ENCODE measurements at regions of chr7 and their contacts with region 1.

Region 1: GRCh38 chr7:75727881-75728592 is 10.7 kb downstream of the HIP1 start:
- DNase-seq: peak; percentile 65
- H3K4me3 Mint-ChIP-seq: peak overlapping the region; percentile 10
- H3K27ac Mint-ChIP-seq: peak overlapping the region; percentile 84
- H3K4me1 Mint-ChIP-seq: peaks cover 27% of the 10 kb centered on the region
- H3K27me3 Mint-ChIP-seq: no peaks in the 10 kb centered on the region

Region 2: DNA sequence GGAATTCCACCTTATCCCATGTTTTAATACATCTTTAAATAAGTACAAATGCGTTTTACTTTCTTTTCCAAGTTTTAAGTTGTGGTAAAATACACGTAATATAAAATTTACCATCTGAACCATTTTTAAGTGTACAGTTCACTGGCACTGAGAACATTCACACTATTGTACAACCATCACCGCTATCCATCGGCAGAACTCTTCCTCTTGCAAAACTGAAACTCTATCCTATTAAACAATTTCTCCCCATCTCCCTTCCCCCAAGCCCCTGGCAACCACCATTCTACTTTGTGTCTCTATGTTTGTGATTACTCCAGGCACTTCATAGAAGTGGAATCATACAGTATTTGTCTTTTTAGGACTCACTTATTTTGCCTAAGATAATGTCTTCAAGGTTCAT is 23.1 kb before region 1 on chr7:
- CTCF ChIA-PET with region 1: no interaction called
- POLR2A ChIA-PET with region 1: no interaction called
- DNase-seq: no peak
- H3K4me3 Mint-ChIP-seq: no peak overlapping the region
- H3K27ac Mint-ChIP-seq: no peak overlapping the region
- H3K4me1 Mint-ChIP-seq: no peaks in the 10 kb centered on the region
- H3K27me3 Mint-ChIP-seq: peaks cover 5% of the 10 kb centered on the region

Region 3: DNA sequence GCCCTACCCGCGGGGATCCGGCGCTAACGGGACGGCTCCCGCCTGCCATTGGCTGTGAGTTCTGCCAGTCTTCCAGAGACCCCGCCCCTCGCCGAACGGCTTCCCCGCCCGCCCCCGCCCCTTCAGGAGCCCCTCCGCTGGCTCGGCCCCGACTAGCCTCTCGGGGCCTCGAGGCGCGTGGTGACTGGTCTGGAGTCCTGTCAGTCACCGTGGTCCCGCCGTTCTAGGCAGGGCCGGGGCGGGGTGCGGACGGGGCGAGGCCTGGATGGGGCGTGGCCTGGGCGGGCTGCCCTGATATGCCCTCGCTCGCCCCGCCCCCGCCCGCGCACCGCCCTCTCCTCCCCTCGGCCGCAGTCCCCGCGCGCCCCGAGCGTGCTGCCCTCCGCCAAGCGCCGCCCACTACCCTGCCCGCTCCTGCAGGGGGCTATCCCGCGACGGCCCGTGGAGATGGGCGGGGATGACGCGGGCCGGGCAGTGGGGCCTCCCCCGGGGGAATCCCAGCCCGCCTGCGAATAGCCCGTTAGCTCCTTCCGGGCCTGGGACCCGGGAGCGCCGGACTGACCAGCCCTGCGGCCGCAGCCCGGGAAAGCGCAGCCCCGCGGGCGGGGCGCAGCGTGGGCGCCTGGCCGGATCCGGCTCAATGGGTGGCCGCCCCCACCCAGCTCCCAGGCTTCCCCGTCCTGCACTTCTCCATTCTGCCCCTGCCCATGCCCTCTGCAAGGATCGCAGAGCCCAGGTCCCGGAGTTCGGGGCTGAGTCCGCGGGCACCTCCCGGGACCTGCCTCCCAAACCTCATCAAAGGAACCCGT is 11.2 kb after region 1 on chr7:
- CTCF ChIA-PET with region 1: no interaction called
- POLR2A ChIA-PET with region 1: interaction called, 18 read pairs
- DNase-seq: peak; percentile 99
- H3K4me3 Mint-ChIP-seq: peak overlapping the region; percentile 88
- H3K27ac Mint-ChIP-seq: peak overlapping the region; percentile 84
- H3K4me1 Mint-ChIP-seq: peaks cover 15% of the 10 kb centered on the region
- H3K27me3 Mint-ChIP-seq: peaks cover 21% of the 10 kb centered on the region

Region 4: GRCh38 chr7:75814407-75814947 is 86.4 kb after region 1 on chr7:
- CTCF ChIA-PET with region 1: no interaction called
- POLR2A ChIA-PET with region 1: no interaction called
- DNase-seq: no peak
- H3K4me3 Mint-ChIP-seq: no peak overlapping the region
- H3K27ac Mint-ChIP-seq: no peak overlapping the region
- H3K4me1 Mint-ChIP-seq: no peaks in the 10 kb centered on the region
- H3K27me3 Mint-ChIP-seq: peaks cover 3% of the 10 kb centered on the region

Measured in activated CD4-positive, alpha-beta memory T cell treated with anti-CD3 and anti-CD28 coated beads, Interleukin-2, amount 10 ng/mL, durations not matched to agents 7 days and 5 days (primary cell).